ENCODE measurements at regions of chr1 and their contacts with region 1.

Region 1: GRCh38 chr1:222928212-222928611 is 113.4 kb downstream of the DISP1 start:
- DNase-seq: peak; percentile 30 to 64
- ATAC-seq: peak; percentile 91 to 96 (median 94)
- H3K4me3 ChIP-seq: peak overlapping the region; percentile 62
- H3K27ac ChIP-seq: peak overlapping the region; percentile 71
- H3K4me1 ChIP-seq: peaks cover 9% of the 10 kb centered on the region
- H3K27me3 ChIP-seq: no peaks in the 10 kb centered on the region
- CTCF ChIP-seq: peak; percentile 10

Region 2: GRCh38 chr1:222814536-222815439 is 113.4 kb before region 1 on chr1 and contains the start of gene DISP1:
- intact Hi-C with region 1: loop called in 1 of 2 experiments (anchors 10 kb)
- DNase-seq: peak; percentile 89 to 92
- ATAC-seq: peak; percentile 97 to 98 (median 97)
- H3K4me3 ChIP-seq: peak within 1 kb of the TSS; percentile 81
- H3K27ac ChIP-seq: peak within 1 kb of the TSS; percentile 79
- H3K4me1 ChIP-seq: peaks cover 17% of the 10 kb centered on the region
- H3K27me3 ChIP-seq: no peaks in the 10 kb centered on the region
- CTCF ChIP-seq: no peak
- total RNA-seq, gene DISP1: 2.8 to 3.7 (median 3.3) TPM

Region 3: DNA sequence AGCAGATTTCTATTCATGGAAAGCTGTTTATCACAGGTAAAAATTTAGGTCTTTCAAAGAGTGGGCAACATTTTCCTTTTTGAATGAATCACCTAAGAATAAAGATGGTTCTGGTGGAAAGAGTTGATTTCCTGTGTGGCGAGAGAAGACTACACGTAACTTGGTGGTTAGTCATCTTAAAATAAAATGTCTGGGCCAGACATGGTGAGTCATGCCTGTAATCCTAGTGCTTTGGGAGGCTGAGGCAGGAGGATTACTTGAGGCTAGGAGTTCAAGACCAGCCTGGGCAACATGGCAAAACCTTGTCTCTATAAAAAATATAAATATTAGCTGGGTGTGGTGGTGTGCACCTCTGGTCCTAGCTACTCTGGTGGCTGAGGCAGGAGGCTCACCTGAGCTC is 47.6 kb before region 1 on chr1:
- intact Hi-C with region 1: loop called in 1 of 2 experiments (anchors 5 kb)
- DNase-seq: no peak
- ATAC-seq: no peak
- H3K4me3 ChIP-seq: no peak overlapping the region
- H3K27ac ChIP-seq: no peak overlapping the region
- H3K4me1 ChIP-seq: no peaks in the 10 kb centered on the region
- H3K27me3 ChIP-seq: no peaks in the 10 kb centered on the region
- CTCF ChIP-seq: no peak

Region 4: DNA sequence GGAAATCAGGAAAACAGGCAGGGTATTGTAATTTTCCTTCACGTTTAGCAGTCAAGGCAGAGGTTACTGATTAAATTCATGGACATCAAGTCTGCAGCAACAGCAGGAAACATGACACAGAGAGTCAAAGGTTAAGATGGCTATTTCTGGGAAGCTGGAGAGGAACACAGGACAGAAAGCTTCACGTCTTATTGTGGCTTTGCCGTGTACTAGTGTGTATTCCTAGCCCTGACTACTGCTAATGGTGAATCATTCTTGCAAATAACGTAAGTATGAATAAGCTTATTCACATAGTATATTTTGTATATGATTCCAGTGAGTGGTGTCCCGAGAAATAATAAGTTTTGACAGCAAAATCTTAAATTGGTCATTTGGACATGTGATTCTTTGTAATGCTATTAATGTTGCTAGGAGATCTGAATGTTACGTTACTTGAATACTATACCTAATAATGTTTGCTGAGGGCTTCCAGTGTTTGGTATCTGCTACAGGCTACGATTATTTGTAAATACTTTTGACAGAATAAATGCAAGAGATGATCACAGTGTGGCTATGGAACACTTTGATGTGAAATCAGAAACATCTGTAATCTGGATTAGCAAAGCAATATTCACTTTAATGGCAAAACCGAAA is 36.0 kb before region 1 on chr1:
- intact Hi-C with region 1: loop called in 1 of 2 experiments (anchors 5 kb)
- DNase-seq: no peak
- ATAC-seq: peak; percentile 75 to 91 (median 84)
- H3K4me3 ChIP-seq: peak overlapping the region; percentile 24
- H3K27ac ChIP-seq: peak overlapping the region; percentile 77
- H3K4me1 ChIP-seq: peaks cover 15% of the 10 kb centered on the region
- H3K27me3 ChIP-seq: no peaks in the 10 kb centered on the region
- CTCF ChIP-seq: no peak

Region 5: GRCh38 chr1:223233410-223234169 is 305.4 kb after region 1 on chr1:
- intact Hi-C with region 1: no loop called
- DNase-seq: no peak
- ATAC-seq: peak in 2 of 4 donors; percentile 19 to 38
- H3K4me3 ChIP-seq: no peak overlapping the region
- H3K27ac ChIP-seq: no peak overlapping the region
- H3K4me1 ChIP-seq: no peaks in the 10 kb centered on the region
- H3K27me3 ChIP-seq: no peaks in the 10 kb centered on the region
- CTCF ChIP-seq: no peak

Measured in psoas muscle (tissue), 8 donors.